CD4-positive, alpha-beta T cell (primary cell): ENCODE measurements at regions of chr6 and their contacts with region 1.

Region 1: GRCh38 chr6:27157459-27158315 is 89.8 kb upstream of the PRSS16 start:
- DNase-seq: peak; percentile 73 to 93 (median 85)
- ATAC-seq: peak; percentile 88
- H3K4me3 ChIP-seq: peak overlapping the region; percentile 59
- H3K4me3 Mint-ChIP-seq: peak overlapping the region; percentile 90
- H3K27ac ChIP-seq: peak overlapping the region in 1 of 2 donors; percentile 32
- H3K27ac Mint-ChIP-seq: peak overlapping the region; percentile 96
- H3K4me1 ChIP-seq: peaks cover 22% of the 10 kb centered on the region
- H3K4me1 Mint-ChIP-seq: peaks cover 44% of the 10 kb centered on the region
- H3K27me3 ChIP-seq: no peaks in the 10 kb centered on the region
- H3K27me3 Mint-ChIP-seq: peaks cover 7% of the 10 kb centered on the region
- CTCF ChIP-seq: peak; percentile 78

Region 2: GRCh38 chr6:25842526-25843277 is 1315.0 kb before region 1 on chr6:
- CTCF ChIA-PET with region 1: no interaction called
- POLR2A ChIA-PET with region 1: no interaction called
- intact Hi-C with region 1: no loop called
- DNase-seq: no peak
- ATAC-seq: no peak
- H3K4me3 ChIP-seq: no peak overlapping the region
- H3K4me3 Mint-ChIP-seq: no peak overlapping the region
- H3K27ac ChIP-seq: no peak overlapping the region
- H3K27ac Mint-ChIP-seq: no peak overlapping the region
- H3K4me1 ChIP-seq: no peaks in the 10 kb centered on the region
- H3K4me1 Mint-ChIP-seq: no peaks in the 10 kb centered on the region
- H3K27me3 ChIP-seq: no peaks in the 10 kb centered on the region
- H3K27me3 Mint-ChIP-seq: peaks cover 19% of the 10 kb centered on the region
- CTCF ChIP-seq: no peak

Region 3: DNA sequence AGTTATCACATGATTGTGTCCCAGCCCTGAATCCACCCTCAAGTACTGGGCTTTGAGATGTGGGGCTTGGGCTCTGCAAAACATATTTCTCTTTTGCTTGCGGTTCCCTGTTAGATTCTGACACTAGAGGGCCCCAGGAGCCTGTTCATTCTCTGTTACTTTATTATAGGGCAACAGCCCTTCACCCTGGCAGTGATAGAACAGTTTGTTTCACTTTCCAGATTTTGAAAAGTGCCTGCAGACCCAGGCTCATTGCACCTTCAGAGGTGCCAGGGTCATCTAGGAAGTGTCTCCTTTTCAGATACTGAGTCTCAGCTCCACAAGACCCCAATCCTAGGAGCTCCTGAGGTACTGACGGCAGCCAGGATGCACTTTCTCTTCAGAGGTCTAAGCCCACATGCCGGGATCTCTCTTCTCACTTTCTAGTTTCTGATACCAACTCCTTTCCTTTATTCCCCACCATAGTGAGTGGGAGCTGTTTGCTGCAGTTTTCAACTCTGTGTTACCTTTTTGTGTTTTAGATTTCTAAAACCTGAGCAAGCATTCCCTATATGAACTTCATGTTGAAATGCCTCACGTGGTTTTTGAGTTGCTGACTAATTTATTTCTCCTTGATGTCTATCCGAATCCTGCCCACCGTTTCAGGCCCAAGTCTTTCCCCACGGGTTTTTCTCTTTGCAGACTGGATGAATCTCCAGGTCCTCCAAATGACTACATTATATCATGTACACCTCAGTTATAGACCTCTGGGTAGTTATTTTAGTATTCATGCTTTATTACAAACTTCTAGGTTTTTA is 550.1 kb before region 1 on chr6:
- CTCF ChIA-PET with region 1: no interaction called
- POLR2A ChIA-PET with region 1: no interaction called
- intact Hi-C with region 1: loop called (anchors 5 kb)
- DNase-seq: peak; percentile 21 to 83 (median 49)
- ATAC-seq: peak; percentile 99
- H3K4me3 ChIP-seq: peak overlapping the region; percentile 42
- H3K4me3 Mint-ChIP-seq: peak overlapping the region; percentile 75
- H3K27ac ChIP-seq: no peak overlapping the region
- H3K27ac Mint-ChIP-seq: peak overlapping the region; percentile 21
- H3K4me1 ChIP-seq: peaks cover 11% of the 10 kb centered on the region
- H3K4me1 Mint-ChIP-seq: peaks cover 11% of the 10 kb centered on the region
- H3K27me3 ChIP-seq: peaks cover 0 to 2% of the 10 kb centered on the region in 2 experiments
- H3K27me3 Mint-ChIP-seq: peaks cover 9% of the 10 kb centered on the region
- CTCF ChIP-seq: peak; percentile 79

Region 4: DNA sequence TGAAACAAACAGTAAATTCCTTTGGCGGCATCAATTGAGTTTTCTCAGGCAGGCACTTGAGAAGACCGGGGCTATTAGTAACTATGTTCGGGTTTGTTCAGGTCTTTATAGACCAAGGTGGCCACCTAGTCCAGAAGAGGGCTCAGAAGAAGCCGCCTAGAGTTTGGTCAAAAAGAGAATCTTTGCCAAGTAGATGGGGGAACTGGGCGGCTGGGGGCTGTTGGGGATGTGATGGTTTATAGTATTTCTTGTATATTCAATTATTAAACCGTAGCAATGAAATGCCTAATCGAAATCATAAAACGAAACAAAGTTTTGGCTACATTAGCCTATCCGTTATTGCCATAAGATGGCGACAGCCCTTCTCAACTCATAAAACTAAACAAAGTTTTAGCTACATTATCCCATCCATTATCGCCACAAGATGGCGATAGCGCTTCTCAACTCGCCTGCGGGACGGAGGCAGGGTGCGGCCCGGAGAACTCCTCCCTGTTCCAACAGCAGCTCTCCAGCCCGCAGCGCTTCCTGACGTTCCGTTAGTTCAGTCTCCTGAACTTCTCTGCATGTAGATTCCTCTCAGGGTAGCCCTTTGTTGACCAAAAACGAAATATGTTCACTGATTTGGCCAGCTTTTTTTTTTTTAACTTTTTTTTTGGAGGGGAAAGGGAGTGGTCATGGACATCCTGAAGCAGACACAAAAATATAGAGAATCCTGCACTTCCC is 30.7 kb before region 1 on chr6:
- CTCF ChIA-PET with region 1: interaction called, 29 read pairs
- POLR2A ChIA-PET with region 1: interaction called, 37 read pairs
- intact Hi-C with region 1: loop called (anchors 1 kb)
- DNase-seq: peak; percentile 65 to 93 (median 76)
- ATAC-seq: peak; percentile 75
- H3K4me3 ChIP-seq: peak overlapping the region; percentile 39
- H3K4me3 Mint-ChIP-seq: peak overlapping the region; percentile 84
- H3K27ac ChIP-seq: no peak overlapping the region
- H3K27ac Mint-ChIP-seq: peak overlapping the region; percentile 65
- H3K4me1 ChIP-seq: peaks cover 17% of the 10 kb centered on the region
- H3K4me1 Mint-ChIP-seq: peaks cover 28% of the 10 kb centered on the region
- H3K27me3 ChIP-seq: no peaks in the 10 kb centered on the region
- H3K27me3 Mint-ChIP-seq: no peaks in the 10 kb centered on the region
- CTCF ChIP-seq: peak; percentile 95

Region 5: GRCh38 chr6:27608916-27609883 is 451.5 kb after region 1 on chr6:
- CTCF ChIA-PET with region 1: no interaction called
- POLR2A ChIA-PET with region 1: no interaction called
- intact Hi-C with region 1: loop called in 1 of 2 experiments (anchors 5 kb)
- DNase-seq: peak in 3 of 14 experiments; percentile 48 to 58 (median 56)
- ATAC-seq: no peak
- H3K4me3 ChIP-seq: no peak overlapping the region
- H3K4me3 Mint-ChIP-seq: no peak overlapping the region
- H3K27ac ChIP-seq: no peak overlapping the region
- H3K27ac Mint-ChIP-seq: no peak overlapping the region
- H3K4me1 ChIP-seq: peaks cover 10% of the 10 kb centered on the region
- H3K4me1 Mint-ChIP-seq: peaks cover 18% of the 10 kb centered on the region
- H3K27me3 ChIP-seq: peaks cover 25 to 45% of the 10 kb centered on the region in 2 experiments
- H3K27me3 Mint-ChIP-seq: peaks cover 74% of the 10 kb centered on the region
- CTCF ChIP-seq: peak; percentile 59

Region 6: DNA sequence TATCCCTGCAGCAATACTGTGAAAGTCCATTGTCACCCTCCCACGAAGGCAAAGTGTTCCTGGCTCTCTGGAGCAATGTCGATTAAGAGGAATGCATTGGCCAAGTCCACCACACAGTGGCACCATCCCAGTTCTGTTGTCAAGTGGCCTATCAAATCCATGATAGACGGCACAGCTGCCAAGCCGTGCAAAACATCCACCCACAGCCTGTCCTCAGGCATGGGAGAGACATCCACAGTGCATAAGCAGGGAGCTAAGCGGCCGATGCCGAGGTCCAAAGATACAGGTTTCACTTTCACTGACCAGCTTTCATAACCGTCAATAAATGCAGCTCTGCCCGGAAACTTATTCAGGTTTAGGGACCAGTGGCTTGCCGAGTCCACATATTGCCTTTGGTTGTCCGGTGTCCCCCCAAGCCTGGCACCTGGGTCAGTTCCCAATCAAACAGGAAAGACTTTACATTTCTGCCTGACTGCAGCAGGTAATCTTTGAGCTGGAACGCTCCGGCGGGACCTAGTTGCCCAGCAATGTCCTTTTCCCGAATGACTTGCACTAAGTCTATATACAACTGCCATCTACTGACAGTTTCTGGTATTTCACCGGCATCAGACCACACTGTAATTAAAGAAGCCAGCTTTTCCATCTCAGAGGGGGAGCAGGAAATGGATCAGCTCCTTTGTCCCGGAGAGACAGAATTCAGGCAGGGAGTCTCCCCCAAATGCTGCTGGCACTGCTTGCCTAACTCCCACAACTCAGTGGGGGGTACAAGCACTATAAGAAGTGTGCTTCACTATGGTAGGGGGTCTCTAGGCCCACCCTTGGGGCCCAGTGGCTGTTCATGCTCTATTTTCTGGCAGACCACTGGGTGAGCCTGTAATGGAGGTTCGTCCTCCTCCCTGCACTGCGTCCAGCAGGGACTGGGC is 1198.3 kb after region 1 on chr6:
- CTCF ChIA-PET with region 1: no interaction called
- POLR2A ChIA-PET with region 1: no interaction called
- intact Hi-C with region 1: loop called (anchors 1 to 2 kb)
- DNase-seq: peak; percentile 26 to 84 (median 42)
- ATAC-seq: peak; percentile 93
- H3K4me3 ChIP-seq: peak overlapping the region; percentile 64
- H3K4me3 Mint-ChIP-seq: peak overlapping the region; percentile 90
- H3K27ac ChIP-seq: no peak overlapping the region
- H3K27ac Mint-ChIP-seq: peak overlapping the region; percentile 22
- H3K4me1 ChIP-seq: peaks cover 21% of the 10 kb centered on the region
- H3K4me1 Mint-ChIP-seq: peaks cover 42% of the 10 kb centered on the region
- H3K27me3 ChIP-seq: no peaks in the 10 kb centered on the region
- H3K27me3 Mint-ChIP-seq: no peaks in the 10 kb centered on the region
- CTCF ChIP-seq: peak; percentile 77